ENCODE measurements at regions of chr5 and their contacts with region 1.

Region 1: GRCh38 chr5:172479044-172479783 is 24.9 kb upstream of the SH3PXD2B start:
- DNase-seq: peak; percentile 59 to 92 (median 84)
- H3K4me3 ChIP-seq: peak overlapping the region in 2 of 59 donors; percentile 6 to 20
- H3K27ac ChIP-seq: peak overlapping the region in 18 of 59 donors; percentile 0 to 46 (median 22)
- H3K27me3 ChIP-seq: no peaks in the 10 kb centered on the region
- CTCF ChIP-seq: peak; percentile 60 to 97 (median 90)

Region 2: DNA sequence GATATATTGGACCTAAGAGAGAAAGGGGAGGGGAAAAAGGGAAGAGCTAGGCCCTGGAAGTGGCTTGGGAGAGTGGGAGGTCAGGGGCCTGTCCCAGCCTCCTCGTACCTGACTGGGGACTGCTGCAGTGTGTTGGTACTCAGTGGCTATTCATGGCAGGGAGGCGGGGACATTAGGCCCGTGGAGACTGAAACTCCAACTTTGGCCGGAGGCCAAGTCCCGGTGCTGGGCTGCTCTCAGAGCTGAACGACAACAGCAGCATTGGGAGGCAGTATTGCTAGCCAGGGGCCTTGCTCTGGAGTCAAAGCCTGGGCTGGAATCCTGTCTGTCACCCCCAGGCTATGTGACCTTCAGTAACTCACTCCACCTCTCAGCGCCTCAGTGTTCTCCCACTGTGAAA is 199.7 kb after region 1 on chr5:
- intact Hi-C with region 1: no loop called
- DNase-seq: peak in 9 of 10 donors; percentile 55 to 87 (median 76)
- H3K4me3 ChIP-seq: peak overlapping the region in 1 of 59 donors; percentile 9
- H3K27ac ChIP-seq: peak overlapping the region in 43 of 59 donors; percentile 2 to 88 (median 58)
- H3K27me3 ChIP-seq: peaks cover 0 to 10% (median 0%) of the 10 kb centered on the region in 45 donors
- CTCF ChIP-seq: peak in 2 of 56 donors; percentile 9 to 31

Region 3: GRCh38 chr5:172920447-172920849 is 441.2 kb after region 1 on chr5:
- intact Hi-C with region 1: loop called in 1 of 2 experiments (anchors 10 kb)
- DNase-seq: peak in 6 of 10 donors; percentile 57 to 86 (median 72)
- H3K4me3 ChIP-seq: no peak overlapping the region
- H3K27ac ChIP-seq: peak overlapping the region in 42 of 59 donors; percentile 9 to 84 (median 57)
- H3K27me3 ChIP-seq: no peaks in the 10 kb centered on the region
- CTCF ChIP-seq: no peak